Vagina (tissue), 2 donors: ENCODE measurements at regions of chr11 and their contacts with region 1.

Region 1: GRCh38 chr11:126655807-126656128 is 300.3 kb downstream of the ST3GAL4 start:
- DNase-seq: no peak
- H3K4me3 ChIP-seq: no peak overlapping the region
- H3K27ac ChIP-seq: no peak overlapping the region
- H3K4me1 ChIP-seq: peaks cover 11% of the 10 kb centered on the region
- H3K27me3 ChIP-seq: no peaks in the 10 kb centered on the region
- CTCF ChIP-seq: no peak
- POLR2A ChIP-seq: no peak

Region 2: DNA sequence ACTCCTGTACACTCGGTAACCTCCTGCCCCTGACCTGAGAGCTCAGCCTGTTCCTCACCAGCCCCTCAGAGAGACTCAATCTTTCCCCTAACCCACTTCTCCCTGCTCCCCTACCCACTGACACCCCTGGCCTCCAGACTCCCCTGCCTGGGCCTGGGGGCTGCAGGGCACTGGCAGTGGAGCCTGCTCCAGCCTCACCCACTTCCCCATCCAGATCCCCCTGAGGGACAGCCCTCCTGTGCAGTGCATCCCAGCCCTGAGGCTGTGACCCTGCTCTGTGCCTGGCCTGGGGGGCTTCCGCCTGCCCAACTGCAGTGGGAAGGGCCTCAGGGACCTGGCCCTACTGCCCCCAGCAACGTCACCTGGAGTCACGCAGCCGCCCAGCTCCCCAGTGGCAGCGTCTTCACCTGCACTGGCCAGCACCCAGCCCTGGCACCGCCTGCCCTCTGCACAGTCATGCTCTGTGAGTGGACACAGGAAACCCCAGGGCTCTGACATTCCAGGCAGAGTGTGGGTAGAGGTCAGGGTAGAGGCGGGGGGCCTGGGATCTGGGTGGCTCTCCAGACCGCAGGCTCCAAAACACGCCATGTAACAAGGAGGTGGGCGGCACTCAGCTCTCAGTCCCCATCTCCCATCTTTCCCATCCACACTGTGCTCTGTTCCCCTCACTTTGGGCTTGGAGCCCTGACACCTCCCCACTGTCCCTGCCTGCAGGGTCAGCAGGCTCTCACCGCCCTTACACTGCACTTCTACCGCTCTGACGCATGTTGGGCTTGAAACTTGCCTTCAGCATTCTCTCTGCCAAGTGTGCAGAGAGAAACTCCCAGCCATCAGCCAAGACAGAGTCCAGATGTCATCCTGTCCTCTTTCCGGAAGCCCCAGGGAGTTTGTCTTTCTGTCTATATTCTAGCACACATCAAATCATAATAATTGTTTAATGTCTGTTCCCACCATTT is 704.8 kb before region 1 on chr11:
- intact Hi-C with region 1: loop called (anchors 10 kb)
- DNase-seq: peak; percentile 95
- H3K4me3 ChIP-seq: peak overlapping the region in 1 of 2 donors; percentile 17
- H3K27ac ChIP-seq: peak overlapping the region; percentile 63
- H3K4me1 ChIP-seq: peaks cover 35% of the 10 kb centered on the region
- H3K27me3 ChIP-seq: no peaks in the 10 kb centered on the region
- CTCF ChIP-seq: no peak
- POLR2A ChIP-seq: no peak

Region 3: GRCh38 chr11:126816645-126817044 is 160.9 kb after region 1 on chr11:
- intact Hi-C with region 1: no loop called
- DNase-seq: no peak
- H3K4me3 ChIP-seq: no peak overlapping the region
- H3K27ac ChIP-seq: no peak overlapping the region
- H3K4me1 ChIP-seq: no peaks in the 10 kb centered on the region
- H3K27me3 ChIP-seq: no peaks in the 10 kb centered on the region
- CTCF ChIP-seq: no peak
- POLR2A ChIP-seq: no peak